Naive thymus-derived CD4-positive, alpha-beta T cell (primary cell): ENCODE measurements at regions of chr7 and their contacts with region 1.

Region 1: DNA sequence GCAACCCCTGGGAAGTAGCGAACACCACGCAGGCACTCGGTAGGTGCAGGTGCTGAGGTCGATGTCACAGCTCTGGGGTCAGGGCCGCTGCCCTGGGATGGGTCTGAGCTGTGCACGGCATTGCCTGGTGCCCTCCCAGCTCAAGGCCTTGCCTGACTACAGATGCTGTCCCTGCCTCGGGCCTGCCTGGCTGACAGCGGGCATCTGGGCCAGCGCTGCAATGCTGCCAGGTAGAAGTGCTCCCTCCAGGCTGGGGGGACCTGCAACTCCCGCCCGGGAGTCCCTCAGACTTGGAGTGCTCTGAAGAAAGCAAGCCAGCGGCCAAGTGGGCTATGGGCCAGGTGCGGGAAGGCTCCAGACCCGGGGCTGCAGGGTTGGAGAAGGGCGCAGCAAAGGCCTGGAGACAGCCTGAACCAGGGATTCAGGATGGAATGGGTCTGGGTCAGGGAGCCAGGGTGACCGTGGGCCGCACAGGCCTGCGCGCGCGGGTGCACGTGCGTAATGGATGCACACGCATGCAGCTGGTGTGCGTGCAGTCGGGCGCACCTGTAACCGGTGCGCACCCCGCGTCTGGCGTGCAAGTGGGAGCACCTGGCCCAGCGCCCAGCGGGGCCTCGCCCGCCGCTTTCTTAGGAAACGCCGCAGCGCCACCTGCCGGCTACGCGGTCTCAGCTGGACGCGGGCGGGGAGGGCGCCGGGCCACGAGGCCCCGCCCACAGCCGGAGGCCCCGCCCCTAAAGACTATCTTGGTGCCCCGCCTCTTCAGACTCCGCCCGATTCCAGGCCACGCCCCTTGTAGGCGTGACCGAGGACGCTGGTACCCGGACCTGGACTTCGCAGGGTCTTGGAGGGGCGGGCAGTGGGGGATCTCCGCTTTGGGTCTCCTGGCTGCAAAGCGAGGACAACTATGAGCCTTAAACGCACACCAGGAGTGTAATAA is 46.7 kb downstream of the MICALL2 start:
- DNase-seq: peak; percentile 83 to 92 (median 90)
- ATAC-seq: peak; percentile 98
- H3K4me3 ChIP-seq: peak overlapping the region; percentile 27
- H3K4me3 Mint-ChIP-seq: peak overlapping the region in 9 of 10 donors; percentile 64 to 79 (median 68)
- H3K27ac ChIP-seq: no peak overlapping the region
- H3K27ac Mint-ChIP-seq: peak overlapping the region in 5 of 9 donors; percentile 43 to 86 (median 56)
- H3K4me1 ChIP-seq: peaks cover 0 to 9% of the 10 kb centered on the region in 2 donors
- H3K4me1 Mint-ChIP-seq: peaks cover 5 to 16% (median 12%) of the 10 kb centered on the region in 7 donors
- H3K27me3 ChIP-seq: no peaks in the 10 kb centered on the region
- H3K27me3 Mint-ChIP-seq: peaks cover 0 to 14% (median 4%) of the 10 kb centered on the region in 5 donors

Region 2: DNA sequence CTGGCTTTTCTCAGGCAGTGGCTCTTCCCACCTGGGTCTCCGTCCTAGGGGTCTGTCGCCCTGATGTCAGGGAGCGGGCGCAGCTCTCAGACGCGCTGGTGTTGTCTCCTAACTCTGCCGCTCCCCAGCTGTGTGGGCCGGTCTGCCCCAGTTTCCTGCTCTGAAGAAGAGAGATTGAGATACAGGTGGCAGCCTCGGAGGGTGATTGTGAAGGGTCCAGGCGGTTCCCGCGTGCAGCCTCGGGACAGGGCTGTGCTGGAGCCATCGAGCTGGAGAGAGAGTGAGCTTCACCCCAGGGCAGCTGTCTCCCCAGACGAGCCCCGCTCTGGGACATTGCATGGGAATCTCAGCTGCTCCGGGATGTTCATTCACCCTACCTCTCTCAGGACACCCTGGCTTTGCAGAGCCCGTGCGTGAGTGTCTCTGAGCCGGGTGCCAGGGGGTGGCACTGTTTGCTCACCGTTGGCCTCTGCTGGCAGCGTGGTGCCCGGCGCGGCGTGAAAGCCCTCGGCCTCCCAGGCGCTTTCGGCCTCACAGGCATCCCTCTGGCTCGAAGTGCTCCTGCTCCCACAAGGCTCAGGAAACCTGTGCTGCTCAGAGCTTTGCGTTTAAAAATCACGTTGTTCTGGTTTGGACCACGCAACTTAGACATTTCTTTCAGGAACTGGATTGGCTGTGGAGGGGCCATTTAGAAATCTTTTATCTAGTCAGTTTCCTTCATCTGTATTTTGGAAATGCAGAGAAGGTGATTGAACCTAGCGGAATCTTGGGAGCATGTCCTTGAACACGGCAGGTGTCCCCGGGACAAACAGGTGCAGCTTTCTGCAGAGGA is 218.8 kb before region 1 on chr7:
- CTCF ChIA-PET with region 1: no interaction called
- POLR2A ChIA-PET with region 1: no interaction called
- intact Hi-C with region 1: loop called (anchors 5 kb)
- DNase-seq: peak in 3 of 9 donors; percentile 10 to 37 (median 19)
- ATAC-seq: peak; percentile 68
- H3K4me3 ChIP-seq: no peak overlapping the region
- H3K4me3 Mint-ChIP-seq: no peak overlapping the region
- H3K27ac ChIP-seq: no peak overlapping the region
- H3K27ac Mint-ChIP-seq: peak overlapping the region in 1 of 9 donors; percentile 13
- H3K4me1 ChIP-seq: peaks cover 0 to 5% of the 10 kb centered on the region in 2 donors
- H3K4me1 Mint-ChIP-seq: peaks cover 5 to 26% (median 10%) of the 10 kb centered on the region in 7 donors
- H3K27me3 ChIP-seq: no peaks in the 10 kb centered on the region
- H3K27me3 Mint-ChIP-seq: peaks cover 0 to 32% (median 13%) of the 10 kb centered on the region in 5 donors

Region 3: DNA sequence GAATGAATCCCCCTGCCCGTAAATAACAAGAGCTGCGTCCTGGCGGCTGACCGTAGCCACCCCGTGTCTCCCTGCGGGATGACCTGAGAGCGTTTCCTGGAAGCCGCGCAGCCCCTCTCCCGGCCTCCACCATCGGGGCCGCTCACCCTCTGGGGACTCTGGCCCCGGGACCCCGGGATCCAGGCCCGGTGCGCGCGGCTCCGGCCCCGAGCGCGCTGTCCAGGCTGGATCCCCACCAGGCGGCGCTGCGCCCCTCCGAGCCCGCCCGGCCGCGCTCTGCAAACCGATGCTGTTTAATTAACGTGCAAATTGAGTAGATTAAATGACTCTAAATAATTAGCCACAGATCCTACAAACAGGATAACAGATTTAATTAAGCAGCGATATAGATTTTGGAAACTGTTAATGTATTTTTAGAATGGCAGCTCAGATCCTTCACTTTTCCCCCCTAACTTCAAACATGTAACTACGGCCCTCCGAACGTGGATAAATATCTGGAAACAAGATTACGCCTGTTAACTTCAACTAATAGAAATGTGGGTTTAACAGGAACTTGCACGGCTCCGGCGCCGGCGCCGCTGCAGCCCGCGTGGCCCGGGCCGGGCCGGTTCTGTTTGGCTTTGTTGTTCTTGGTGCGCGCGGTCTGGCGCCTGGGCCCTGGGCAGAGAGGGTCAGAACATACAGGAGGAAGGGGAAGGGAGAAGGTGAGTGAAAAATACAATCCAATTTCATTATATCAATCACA is 187.0 kb before region 1 on chr7:
- CTCF ChIA-PET with region 1: no interaction called
- POLR2A ChIA-PET with region 1: no interaction called
- intact Hi-C with region 1: loop called in 1 of 2 experiments (anchors 10 kb)
- DNase-seq: peak in 8 of 9 donors; percentile 11 to 54 (median 42)
- ATAC-seq: peak; percentile 63
- H3K4me3 ChIP-seq: no peak overlapping the region
- H3K4me3 Mint-ChIP-seq: peak overlapping the region in 4 of 10 donors; percentile 28 to 41 (median 40)
- H3K27ac ChIP-seq: no peak overlapping the region
- H3K27ac Mint-ChIP-seq: peak overlapping the region in 4 of 9 donors; percentile 23 to 60 (median 40)
- H3K4me1 ChIP-seq: no peaks in the 10 kb centered on the region
- H3K4me1 Mint-ChIP-seq: peaks cover 0 to 23% (median 14%) of the 10 kb centered on the region in 7 donors
- H3K27me3 ChIP-seq: peaks cover 7 to 45% of the 10 kb centered on the region in 2 donors
- H3K27me3 Mint-ChIP-seq: peaks cover 47 to 77% (median 63%) of the 10 kb centered on the region in 5 donors

Region 4: DNA sequence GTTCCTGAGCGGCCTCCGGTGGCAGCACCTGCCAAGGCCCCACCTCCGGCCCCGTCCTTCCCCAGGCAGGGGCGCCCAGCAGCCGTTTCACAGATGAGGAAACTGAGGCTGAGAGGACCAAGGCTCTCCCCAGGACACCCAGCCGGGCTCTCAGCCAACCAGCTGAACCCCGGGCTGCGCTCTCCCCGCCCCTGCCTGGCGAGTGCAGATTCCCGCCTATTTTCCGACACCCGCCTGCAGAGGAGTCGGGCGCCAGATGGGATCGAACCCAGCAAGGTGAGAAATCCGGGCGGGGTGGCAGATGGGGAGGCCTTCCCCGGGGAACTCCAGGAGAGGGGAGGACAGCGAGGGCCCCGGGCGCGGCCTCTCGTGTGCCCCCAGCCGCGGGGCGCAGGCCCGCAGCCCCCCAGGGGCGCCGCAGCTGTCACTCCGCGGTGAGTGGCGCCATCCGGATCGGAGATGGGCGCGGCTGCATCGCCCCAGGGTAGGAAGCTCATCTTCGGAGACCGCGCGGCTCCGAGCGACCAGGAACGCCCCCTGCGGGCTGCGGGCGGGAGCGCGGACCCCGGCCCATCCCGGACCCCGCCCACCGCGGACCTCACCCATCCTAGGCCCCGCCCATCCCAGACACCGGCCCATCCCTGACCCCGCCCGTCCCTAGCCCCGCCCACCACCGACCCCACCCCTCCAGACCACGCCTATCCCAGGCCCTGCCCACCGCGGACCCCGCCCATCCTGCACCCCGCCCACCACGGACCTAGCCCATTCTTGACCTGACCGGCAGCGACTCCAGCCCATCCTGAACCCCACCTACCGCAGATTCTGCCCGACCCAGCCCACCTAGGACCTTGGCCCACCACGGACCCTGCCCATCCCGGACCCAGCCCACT is 43.7 kb before region 1 on chr7:
- CTCF ChIA-PET with region 1: no interaction called
- POLR2A ChIA-PET with region 1: no interaction called
- intact Hi-C with region 1: loop called in 1 of 2 experiments (anchors 2 kb)
- DNase-seq: peak in 2 of 9 donors; percentile 3 to 42
- ATAC-seq: peak; percentile 45
- H3K4me3 ChIP-seq: no peak overlapping the region
- H3K4me3 Mint-ChIP-seq: peak overlapping the region in 5 of 10 donors; percentile 12 to 43 (median 14)
- H3K27ac ChIP-seq: no peak overlapping the region
- H3K27ac Mint-ChIP-seq: no peak overlapping the region
- H3K4me1 ChIP-seq: no peaks in the 10 kb centered on the region
- H3K4me1 Mint-ChIP-seq: peaks cover 0 to 5% (median 0%) of the 10 kb centered on the region in 7 donors
- H3K27me3 ChIP-seq: no peaks in the 10 kb centered on the region
- H3K27me3 Mint-ChIP-seq: peaks cover 33 to 68% (median 39%) of the 10 kb centered on the region in 5 donors

Region 5: GRCh38 chr7:1432411-1433082 is 20.0 kb after region 1 on chr7:
- CTCF ChIA-PET with region 1: interaction called, 8 read pairs
- POLR2A ChIA-PET with region 1: no interaction called
- intact Hi-C with region 1: loop called (anchors 1 to 2 kb)
- DNase-seq: peak; percentile 51 to 85 (median 70)
- ATAC-seq: peak; percentile 87
- H3K4me3 ChIP-seq: no peak overlapping the region
- H3K4me3 Mint-ChIP-seq: peak overlapping the region in 1 of 10 donors; percentile 8
- H3K27ac ChIP-seq: no peak overlapping the region
- H3K27ac Mint-ChIP-seq: peak overlapping the region in 3 of 9 donors; percentile 26 to 64 (median 61)
- H3K4me1 ChIP-seq: no peaks in the 10 kb centered on the region
- H3K4me1 Mint-ChIP-seq: peaks cover 2 to 8% (median 4%) of the 10 kb centered on the region in 7 donors
- H3K27me3 ChIP-seq: no peaks in the 10 kb centered on the region
- H3K27me3 Mint-ChIP-seq: peaks cover 0 to 6% (median 4%) of the 10 kb centered on the region in 5 donors

Region 6: GRCh38 chr7:1452205-1452604 is 39.6 kb after region 1 on chr7:
- CTCF ChIA-PET with region 1: no interaction called
- POLR2A ChIA-PET with region 1: no interaction called
- intact Hi-C with region 1: no loop called
- DNase-seq: no peak
- ATAC-seq: no peak
- H3K4me3 ChIP-seq: no peak overlapping the region
- H3K4me3 Mint-ChIP-seq: peak overlapping the region in 1 of 10 donors; percentile 63
- H3K27ac ChIP-seq: no peak overlapping the region
- H3K27ac Mint-ChIP-seq: no peak overlapping the region
- H3K4me1 ChIP-seq: no peaks in the 10 kb centered on the region
- H3K4me1 Mint-ChIP-seq: peaks cover 0 to 4% (median 0%) of the 10 kb centered on the region in 7 donors
- H3K27me3 ChIP-seq: no peaks in the 10 kb centered on the region
- H3K27me3 Mint-ChIP-seq: peaks cover 0 to under 1% (median 0%) of the 10 kb centered on the region in 5 donors

Region 7: DNA sequence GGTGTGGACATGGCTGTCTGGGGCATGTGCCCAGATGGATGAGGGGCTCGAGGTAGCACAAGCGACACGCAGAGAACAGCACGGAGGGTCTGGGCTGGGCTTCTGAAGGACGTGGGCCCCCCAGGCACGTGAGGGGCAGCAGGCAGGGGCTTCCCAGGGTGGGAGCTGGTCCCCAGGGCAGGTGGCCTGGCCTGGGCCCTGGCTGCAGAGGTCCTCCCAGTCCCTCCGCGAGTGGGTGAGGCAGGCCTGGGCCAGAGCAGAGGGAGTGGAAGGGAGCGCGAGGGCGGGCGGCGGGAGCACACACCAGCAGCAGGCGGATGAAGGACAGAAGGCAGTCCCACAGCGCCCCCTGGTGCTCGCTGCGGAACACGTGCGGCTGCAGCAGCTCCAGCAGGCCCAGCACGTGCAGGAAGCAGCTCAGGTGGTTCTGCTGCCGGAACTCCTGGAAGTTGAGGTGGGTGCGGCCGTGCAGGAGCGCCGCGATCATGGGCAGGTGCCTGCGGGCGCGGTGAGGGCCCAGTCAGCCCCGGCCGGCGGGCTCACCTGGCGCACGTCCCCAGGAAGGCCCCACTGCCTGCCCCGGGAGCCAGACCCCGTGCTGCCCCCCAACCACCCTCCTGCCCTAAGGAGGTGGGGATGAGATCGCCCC is 61.4 kb after region 1 on chr7:
- CTCF ChIA-PET with region 1: no interaction called
- POLR2A ChIA-PET with region 1: no interaction called
- intact Hi-C with region 1: loop called in 1 of 2 experiments (anchors 1 kb)
- DNase-seq: peak; percentile 77 to 89 (median 87)
- ATAC-seq: peak; percentile 90
- H3K4me3 ChIP-seq: no peak overlapping the region
- H3K4me3 Mint-ChIP-seq: peak overlapping the region in 1 of 10 donors; percentile 49
- H3K27ac ChIP-seq: peak overlapping the region; percentile 45
- H3K27ac Mint-ChIP-seq: no peak overlapping the region
- H3K4me1 ChIP-seq: peaks cover 3 to 14% of the 10 kb centered on the region in 2 donors
- H3K4me1 Mint-ChIP-seq: peaks cover 3 to 12% (median 9%) of the 10 kb centered on the region in 7 donors
- H3K27me3 ChIP-seq: no peaks in the 10 kb centered on the region
- H3K27me3 Mint-ChIP-seq: no peaks in the 10 kb centered on the region

Region 8: GRCh38 chr7:1503816-1504775 is 91.5 kb after region 1 on chr7 and contains the start of gene INTS1:
- CTCF ChIA-PET with region 1: no interaction called
- POLR2A ChIA-PET with region 1: no interaction called
- intact Hi-C with region 1: no loop called
- DNase-seq: peak; percentile 82 to 93 (median 88)
- ATAC-seq: peak; percentile 96
- H3K4me3 ChIP-seq: peak within 1 kb of the TSS; percentile 77
- H3K4me3 Mint-ChIP-seq: peak within 1 kb of the TSS; percentile 80 to 94 (median 87)
- H3K27ac ChIP-seq: peak within 1 kb of the TSS; percentile 77
- H3K27ac Mint-ChIP-seq: peak within 1 kb of the TSS in 8 of 9 donors; percentile 59 to 88 (median 77)
- H3K4me1 ChIP-seq: peaks cover 18 to 35% of the 10 kb centered on the region in 2 donors
- H3K4me1 Mint-ChIP-seq: peaks cover 35 to 60% (median 42%) of the 10 kb centered on the region in 7 donors
- H3K27me3 ChIP-seq: no peaks in the 10 kb centered on the region
- H3K27me3 Mint-ChIP-seq: peaks cover 0 to 4% (median 0%) of the 10 kb centered on the region in 5 donors
- total RNA-seq, gene INTS1: 82.0 to 157 (median 111) TPM

Region 9: DNA sequence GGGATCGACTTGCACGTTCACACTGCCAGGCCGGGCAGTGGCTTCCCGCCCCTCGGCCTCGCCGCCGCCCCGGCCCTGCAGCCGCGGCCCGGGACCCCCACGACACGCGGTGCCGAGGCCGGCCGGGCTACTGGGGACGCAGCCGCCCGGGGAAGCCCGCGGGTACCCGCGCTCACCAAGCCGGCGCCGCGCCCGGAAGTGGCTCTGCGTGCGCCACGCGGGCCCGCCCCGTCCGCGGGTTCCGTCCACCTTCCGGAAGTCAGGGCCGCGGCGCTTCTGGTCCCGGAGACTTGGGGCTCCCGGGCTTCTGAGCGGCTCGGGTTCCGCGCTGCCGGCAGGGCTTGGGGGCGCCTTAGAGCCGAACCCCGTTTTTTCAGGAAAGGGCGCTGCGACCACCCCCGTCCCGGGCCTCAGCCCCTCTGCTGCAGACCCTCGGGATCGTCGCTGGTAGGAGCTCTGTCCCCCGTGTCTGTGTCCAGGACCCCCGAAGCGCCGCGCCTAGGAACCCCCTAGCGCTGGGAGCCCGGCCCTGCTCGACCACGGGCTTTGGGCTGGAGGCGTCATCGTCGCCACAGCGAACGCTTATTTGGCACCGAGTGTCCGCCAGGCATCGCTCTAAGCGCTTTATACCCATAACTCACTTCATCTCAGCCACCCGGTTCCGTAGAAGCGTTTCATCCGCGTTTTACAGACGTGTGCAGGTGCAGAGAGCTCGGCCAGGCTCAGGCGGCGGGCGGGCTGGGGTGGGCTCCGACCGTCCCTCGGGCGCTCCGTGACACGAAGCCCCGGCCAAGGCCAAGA is 157.4 kb after region 1 on chr7 and contains the start of gene PSMG3:
- CTCF ChIA-PET with region 1: no interaction called
- POLR2A ChIA-PET with region 1: no interaction called
- intact Hi-C with region 1: no loop called
- DNase-seq: peak; percentile 72 to 91 (median 84)
- ATAC-seq: peak; percentile 94
- H3K4me3 ChIP-seq: peak within 1 kb of the TSS; percentile 90
- H3K4me3 Mint-ChIP-seq: peak within 1 kb of the TSS; percentile 77 to 91 (median 86)
- H3K27ac ChIP-seq: peak within 1 kb of the TSS; percentile 95
- H3K27ac Mint-ChIP-seq: peak within 1 kb of the TSS; percentile 81 to 93 (median 88)
- H3K4me1 ChIP-seq: peaks cover 3 to 16% of the 10 kb centered on the region in 2 donors
- H3K4me1 Mint-ChIP-seq: peaks cover 14 to 36% (median 26%) of the 10 kb centered on the region in 7 donors
- H3K27me3 ChIP-seq: no peaks in the 10 kb centered on the region
- H3K27me3 Mint-ChIP-seq: no peaks in the 10 kb centered on the region
- total RNA-seq, gene PSMG3: 12.1 to 31.8 (median 23.2) TPM

Region 10: DNA sequence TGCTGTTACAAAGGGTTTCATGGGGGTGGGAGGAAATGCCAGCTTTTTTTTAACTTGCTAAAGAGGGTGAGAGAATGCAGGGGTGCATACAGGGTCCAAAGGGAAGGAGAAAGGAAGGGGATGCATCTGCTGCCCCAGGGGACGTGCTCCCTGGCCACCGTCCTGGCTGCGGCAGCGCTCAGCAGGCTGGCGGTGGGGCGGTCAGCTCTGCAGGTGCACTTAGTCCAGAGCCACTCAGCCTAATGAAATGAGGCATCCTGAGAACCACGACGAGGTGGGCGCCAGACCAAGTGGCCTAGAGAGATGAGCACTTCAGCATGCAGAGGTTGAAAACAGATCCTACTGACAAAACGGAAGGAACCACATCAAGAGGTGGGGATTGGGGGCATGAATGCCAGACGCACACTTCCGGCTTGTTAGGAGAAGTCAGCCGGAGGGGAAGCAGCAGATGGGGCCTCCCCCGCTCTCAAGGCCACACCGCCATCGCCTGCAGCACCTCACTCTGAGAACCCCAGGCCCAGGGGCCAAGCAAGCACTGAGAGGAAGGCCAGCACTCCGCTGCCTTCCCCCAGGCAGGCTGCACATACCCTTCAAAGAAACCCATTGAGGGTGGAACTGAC is 725.7 kb after region 1 on chr7:
- CTCF ChIA-PET with region 1: no interaction called
- POLR2A ChIA-PET with region 1: no interaction called
- intact Hi-C with region 1: no loop called
- DNase-seq: peak in 8 of 9 donors; percentile 37 to 81 (median 68)
- ATAC-seq: peak; percentile 82
- H3K4me3 ChIP-seq: peak overlapping the region; percentile 26
- H3K4me3 Mint-ChIP-seq: peak overlapping the region; percentile 39 to 81 (median 74)
- H3K27ac ChIP-seq: peak overlapping the region; percentile 61
- H3K27ac Mint-ChIP-seq: peak overlapping the region; percentile 62 to 96 (median 90)
- H3K4me1 ChIP-seq: peaks cover 0 to 3% of the 10 kb centered on the region in 2 donors
- H3K4me1 Mint-ChIP-seq: peaks cover 6 to 15% (median 10%) of the 10 kb centered on the region in 7 donors
- H3K27me3 ChIP-seq: no peaks in the 10 kb centered on the region
- H3K27me3 Mint-ChIP-seq: no peaks in the 10 kb centered on the region